ENCODE measurements at regions of chr3 and their contacts with region 1.

Region 1: DNA sequence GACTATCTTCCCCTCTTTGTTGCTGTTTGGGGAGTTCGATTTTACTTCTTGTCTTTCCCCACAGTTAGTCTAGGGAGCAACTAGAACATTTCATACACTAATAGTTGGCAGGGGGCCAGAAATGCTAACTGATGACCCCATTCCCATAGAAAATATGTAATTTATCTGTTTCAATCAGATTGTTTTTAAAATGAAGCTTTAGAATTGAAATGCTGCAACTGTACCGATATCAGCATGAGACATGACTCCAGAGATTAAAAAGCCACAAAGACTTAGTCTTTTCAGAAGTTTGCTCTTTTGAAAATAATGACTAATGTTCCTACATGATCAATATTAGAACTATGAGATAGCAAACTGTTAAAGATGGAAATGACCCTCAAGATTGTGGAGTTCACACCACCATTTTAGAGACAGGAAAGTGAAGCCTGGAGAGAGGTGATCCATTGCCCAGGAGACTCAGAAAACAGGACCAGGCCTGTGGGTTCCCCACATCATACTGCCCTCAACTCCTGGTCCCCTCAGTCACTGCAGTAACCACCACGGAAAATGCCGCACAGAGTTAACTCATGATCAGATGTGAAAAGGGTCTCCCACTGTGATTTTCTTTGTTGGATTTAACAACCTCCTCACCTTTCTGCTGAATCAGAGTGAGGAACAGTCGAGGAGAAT is 130.3 kb downstream of the CHDH start:
- DNase-seq: no peak
- ATAC-seq: no peak
- H3K4me3 ChIP-seq: no peak overlapping the region
- H3K27ac ChIP-seq: no peak overlapping the region
- H3K4me1 ChIP-seq: peaks cover 0 to 24% (median 5%) of the 10 kb centered on the region in 12 donors
- H3K27me3 ChIP-seq: no peaks in the 10 kb centered on the region
- CTCF ChIP-seq: no peak
- POLR2A ChIP-seq: no peak

Region 2: GRCh38 chr3:53303957-53304356 is 412.0 kb before region 1 on chr3:
- intact Hi-C with region 1: loop called in 8 of 10 experiments (anchors 2 to 5 kb)
- DNase-seq: no peak
- ATAC-seq: peak in 2 of 4 donors; percentile 46 to 52
- H3K4me3 ChIP-seq: no peak overlapping the region
- H3K27ac ChIP-seq: peak overlapping the region; percentile 16 to 82 (median 60)
- H3K4me1 ChIP-seq: peaks cover 0 to 27% (median 7%) of the 10 kb centered on the region in 12 donors
- H3K27me3 ChIP-seq: no peaks in the 10 kb centered on the region
- CTCF ChIP-seq: no peak
- POLR2A ChIP-seq: no peak

Region 3: GRCh38 chr3:53956586-53956985 is 240.6 kb after region 1 on chr3:
- intact Hi-C with region 1: no loop called
- DNase-seq: no peak
- ATAC-seq: no peak
- H3K4me3 ChIP-seq: no peak overlapping the region
- H3K27ac ChIP-seq: no peak overlapping the region
- H3K4me1 ChIP-seq: no peaks in the 10 kb centered on the region
- H3K27me3 ChIP-seq: no peaks in the 10 kb centered on the region
- CTCF ChIP-seq: no peak
- POLR2A ChIP-seq: no peak